Mammary epithelial cell (primary cell): ENCODE measurements at regions of chr14 and their contacts with region 1.

Region 1: DNA sequence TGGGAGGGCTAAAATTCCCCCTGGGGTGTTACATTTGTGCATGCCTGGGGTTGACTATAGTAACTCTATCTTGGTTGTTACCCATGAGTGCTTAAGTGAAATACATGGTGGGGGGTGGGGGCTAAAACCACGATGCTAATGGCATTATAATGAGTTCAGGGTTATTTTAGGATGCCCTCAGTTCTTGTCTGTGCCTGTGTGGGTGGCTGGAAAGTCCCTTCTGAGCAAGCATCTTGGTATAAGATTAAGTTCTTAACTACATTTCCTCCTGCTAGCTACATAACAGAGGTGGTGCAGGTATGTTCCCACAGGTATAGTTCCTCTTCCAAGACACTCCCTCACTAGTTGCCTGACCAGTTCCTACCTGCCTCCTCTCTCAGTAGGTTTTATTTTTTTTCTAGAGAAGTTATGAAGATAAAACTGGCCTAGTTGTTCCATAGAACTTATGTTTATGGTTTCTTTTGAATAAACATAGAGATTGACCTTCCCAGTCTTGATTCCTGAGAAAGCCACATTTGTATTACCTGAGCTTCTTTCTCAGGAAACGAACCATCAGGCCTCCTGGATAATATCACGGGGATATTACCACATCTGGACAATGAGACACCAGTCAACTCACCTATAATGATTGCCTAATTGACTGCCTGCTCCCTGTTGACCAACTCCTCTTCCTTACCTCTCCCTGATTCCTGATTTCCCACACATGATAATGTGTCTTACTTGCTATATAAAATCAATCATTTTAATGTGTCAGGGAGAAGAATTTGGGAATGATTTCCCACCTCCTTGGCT is 822.5 kb downstream of the LRFN5 start:
- DNase-seq: no peak
- H3K4me3 ChIP-seq: no peak overlapping the region
- H3K27ac ChIP-seq: no peak overlapping the region
- H3K4me1 ChIP-seq: no peaks in the 10 kb centered on the region
- H3K27me3 ChIP-seq: no peaks in the 10 kb centered on the region
- CTCF ChIP-seq: no peak

Region 2: GRCh38 chr14:42130809-42131208 is 298.4 kb before region 1 on chr14:
- CTCF ChIA-PET with region 1: interaction called, 12 read pairs
- dilution Hi-C with region 1: no loop called
- in situ Hi-C with region 1: no loop called
- intact Hi-C with region 1: no loop called
- DNase-seq: peak; percentile 48
- H3K4me3 ChIP-seq: no peak overlapping the region
- H3K27ac ChIP-seq: peak overlapping the region; percentile 2
- H3K4me1 ChIP-seq: no peaks in the 10 kb centered on the region
- H3K27me3 ChIP-seq: no peaks in the 10 kb centered on the region
- CTCF ChIP-seq: no peak

Region 3: DNA sequence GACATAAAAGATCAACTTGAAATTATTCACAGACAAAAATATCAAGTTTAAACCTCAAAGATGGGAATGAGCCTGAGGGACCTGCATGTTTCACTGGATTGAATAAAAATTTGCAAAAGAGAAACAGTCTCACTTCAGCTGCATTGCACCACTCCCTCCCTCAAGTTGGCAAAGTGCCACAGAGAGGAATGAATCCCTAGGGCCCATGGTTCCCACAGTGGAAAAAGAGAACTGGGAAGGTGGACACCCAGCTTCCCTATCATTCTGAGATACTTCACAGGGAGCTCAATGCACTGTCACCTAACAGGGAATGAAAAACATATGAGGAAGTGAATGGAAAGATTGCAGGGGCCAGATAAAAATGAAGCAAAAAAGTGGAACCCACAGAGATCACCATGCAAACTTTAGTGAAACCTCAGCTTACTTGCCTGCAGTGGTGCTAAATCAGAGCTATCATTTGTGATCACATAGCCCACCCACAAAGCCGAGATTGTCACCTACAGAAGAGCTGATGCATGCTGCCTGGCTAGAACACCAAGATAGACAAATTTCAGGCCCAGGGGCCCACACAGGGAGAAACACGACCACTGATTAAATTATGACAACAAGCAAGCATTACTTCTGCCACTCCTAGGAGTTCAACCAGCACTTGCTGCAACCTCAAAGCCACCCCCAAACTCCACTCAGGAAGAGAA is 88.7 kb after region 1 on chr14:
- CTCF ChIA-PET with region 1: no interaction called
- dilution Hi-C with region 1: no loop called
- in situ Hi-C with region 1: no loop called
- intact Hi-C with region 1: no loop called
- DNase-seq: no peak
- H3K4me3 ChIP-seq: no peak overlapping the region
- H3K27ac ChIP-seq: no peak overlapping the region
- H3K4me1 ChIP-seq: no peaks in the 10 kb centered on the region
- H3K27me3 ChIP-seq: no peaks in the 10 kb centered on the region
- CTCF ChIP-seq: no peak